Transverse colon (tissue), 4 donors: ENCODE measurements at regions of chr1 and their contacts with region 1.

Region 1: DNA sequence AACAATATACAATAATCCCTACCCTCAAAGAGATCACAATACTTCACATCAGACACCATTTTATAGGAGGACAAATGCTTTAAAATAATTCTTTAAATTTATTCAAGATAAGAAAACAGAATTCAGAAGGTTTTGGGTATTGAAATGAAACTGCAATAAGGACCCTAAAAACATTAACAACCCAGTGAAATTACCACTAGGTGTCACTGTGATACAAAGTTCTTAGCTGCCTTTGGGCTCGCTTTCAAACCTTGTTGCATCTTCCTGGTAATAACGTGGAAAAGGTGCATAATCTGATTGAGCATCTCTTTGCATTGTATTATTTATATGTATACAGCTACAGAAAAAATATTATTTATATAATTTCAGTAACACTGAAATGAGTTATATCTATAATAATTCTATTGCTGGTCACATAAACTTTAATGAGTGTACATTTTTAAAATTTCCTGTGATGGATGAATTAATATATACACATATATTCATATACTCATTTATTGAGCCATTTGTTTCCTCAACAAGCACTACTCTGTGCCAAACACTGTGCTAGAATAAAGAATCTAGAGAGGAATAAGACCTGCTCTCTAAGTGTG is 185.2 kb downstream of the FAF1 start:
- DNase-seq: no peak
- H3K4me3 ChIP-seq: no peak overlapping the region
- H3K27ac ChIP-seq: peak overlapping the region in 1 of 4 donors; percentile 6
- H3K4me1 ChIP-seq: peaks cover 0 to 21% (median 0%) of the 10 kb centered on the region in 4 donors
- H3K27me3 ChIP-seq: no peaks in the 10 kb centered on the region
- CTCF ChIP-seq: peak; percentile 56 to 73 (median 69)
- EP300 ChIP-seq: no peak
- POLR2A ChIP-seq: no peak

Region 2: GRCh38 chr1:50605186-50605875 is 169.5 kb before region 1 on chr1:
- in situ Hi-C with region 1: no loop called
- intact Hi-C with region 1: no loop called
- DNase-seq: peak; percentile 10
- H3K4me3 ChIP-seq: no peak overlapping the region
- H3K27ac ChIP-seq: no peak overlapping the region
- H3K4me1 ChIP-seq: no peaks in the 10 kb centered on the region
- H3K27me3 ChIP-seq: no peaks in the 10 kb centered on the region
- CTCF ChIP-seq: peak; percentile 7 to 52 (median 46)
- EP300 ChIP-seq: no peak
- POLR2A ChIP-seq: no peak

Region 3: GRCh38 chr1:50793521-50793920 is 18.7 kb after region 1 on chr1:
- in situ Hi-C with region 1: no loop called
- intact Hi-C with region 1: loop called (anchors 1 kb)
- DNase-seq: no peak
- H3K4me3 ChIP-seq: no peak overlapping the region
- H3K27ac ChIP-seq: no peak overlapping the region
- H3K4me1 ChIP-seq: no peaks in the 10 kb centered on the region
- H3K27me3 ChIP-seq: no peaks in the 10 kb centered on the region
- CTCF ChIP-seq: no peak
- EP300 ChIP-seq: no peak
- POLR2A ChIP-seq: no peak

Region 4: DNA sequence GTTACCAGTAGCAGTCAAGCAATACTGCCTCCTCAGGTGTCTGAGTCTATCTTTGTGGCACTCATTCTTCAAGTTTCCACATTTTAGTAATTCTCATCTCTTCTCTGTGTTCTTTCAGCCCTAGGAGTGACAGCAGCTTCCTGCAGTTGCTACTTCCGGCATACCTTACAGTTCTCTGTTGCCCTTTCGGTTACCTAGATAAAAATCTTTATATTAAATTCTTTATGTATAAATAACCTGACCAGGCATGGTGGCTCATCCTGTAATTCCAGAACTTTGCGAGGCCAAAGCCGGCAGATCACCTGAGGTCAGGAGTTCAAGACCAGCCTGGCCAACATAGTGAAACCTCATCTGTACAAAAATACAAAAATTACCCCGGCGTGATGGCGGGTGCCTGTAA is 258.0 kb after region 1 on chr1:
- in situ Hi-C with region 1: loop called in 2 of 4 experiments (anchors 10 to 25 kb)
- intact Hi-C with region 1: no loop called
- DNase-seq: no peak
- H3K4me3 ChIP-seq: no peak overlapping the region
- H3K27ac ChIP-seq: no peak overlapping the region
- H3K4me1 ChIP-seq: no peaks in the 10 kb centered on the region
- H3K27me3 ChIP-seq: no peaks in the 10 kb centered on the region
- CTCF ChIP-seq: no peak
- EP300 ChIP-seq: no peak
- POLR2A ChIP-seq: no peak

Region 5: DNA sequence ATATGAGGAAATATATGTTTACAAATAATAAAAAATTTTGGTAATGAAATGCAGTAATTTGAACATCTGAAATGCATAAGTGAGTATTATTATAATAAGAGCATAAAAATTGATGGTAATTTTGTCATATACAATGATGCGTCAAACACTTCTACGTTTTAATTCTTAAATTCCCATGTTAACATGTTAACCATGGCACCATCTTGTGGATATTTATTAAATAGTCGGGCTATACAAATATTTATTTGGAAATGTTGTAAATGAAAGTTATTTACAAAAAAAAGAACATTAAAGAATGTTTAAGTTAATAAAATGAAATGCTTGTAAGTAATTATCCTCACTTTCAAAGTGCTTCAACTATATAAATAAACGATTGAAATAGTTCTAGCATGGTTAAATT is 270.0 kb after region 1 on chr1:
- in situ Hi-C with region 1: loop called in 1 of 4 experiments (anchors 25 kb)
- intact Hi-C with region 1: no loop called
- DNase-seq: no peak
- H3K4me3 ChIP-seq: no peak overlapping the region
- H3K27ac ChIP-seq: no peak overlapping the region
- H3K4me1 ChIP-seq: no peaks in the 10 kb centered on the region
- H3K27me3 ChIP-seq: no peaks in the 10 kb centered on the region
- CTCF ChIP-seq: peak in 3 of 5 experiments; percentile 20 to 38 (median 20)
- EP300 ChIP-seq: no peak
- POLR2A ChIP-seq: no peak